ENCODE measurements at regions of chr4 and their contacts with region 1.

Region 1: GRCh38 chr4:184649026-184649970 is at the starts of genes CASP3 and PRIMPOL:
- DNase-seq: peak; percentile 97
- H3K4me3 ChIP-seq: peak within 1 kb of the TSS; percentile 49 to 89 (median 78)
- H3K27ac ChIP-seq: peak within 1 kb of the TSS; percentile 96
- H3K4me1 ChIP-seq: peaks cover 44% of the 10 kb centered on the region
- H3K27me3 ChIP-seq: no peaks in the 10 kb centered on the region
- CTCF ChIP-seq: peak in 1 of 2 donors; percentile 37
- POLR2A ChIP-seq: peak; percentile 87
- total RNA-seq, gene CASP3: 54.5 and 66.1 TPM in 2 replicates
- total RNA-seq, gene PRIMPOL: 11.1 and 13.6 TPM in 2 replicates

Region 2: DNA sequence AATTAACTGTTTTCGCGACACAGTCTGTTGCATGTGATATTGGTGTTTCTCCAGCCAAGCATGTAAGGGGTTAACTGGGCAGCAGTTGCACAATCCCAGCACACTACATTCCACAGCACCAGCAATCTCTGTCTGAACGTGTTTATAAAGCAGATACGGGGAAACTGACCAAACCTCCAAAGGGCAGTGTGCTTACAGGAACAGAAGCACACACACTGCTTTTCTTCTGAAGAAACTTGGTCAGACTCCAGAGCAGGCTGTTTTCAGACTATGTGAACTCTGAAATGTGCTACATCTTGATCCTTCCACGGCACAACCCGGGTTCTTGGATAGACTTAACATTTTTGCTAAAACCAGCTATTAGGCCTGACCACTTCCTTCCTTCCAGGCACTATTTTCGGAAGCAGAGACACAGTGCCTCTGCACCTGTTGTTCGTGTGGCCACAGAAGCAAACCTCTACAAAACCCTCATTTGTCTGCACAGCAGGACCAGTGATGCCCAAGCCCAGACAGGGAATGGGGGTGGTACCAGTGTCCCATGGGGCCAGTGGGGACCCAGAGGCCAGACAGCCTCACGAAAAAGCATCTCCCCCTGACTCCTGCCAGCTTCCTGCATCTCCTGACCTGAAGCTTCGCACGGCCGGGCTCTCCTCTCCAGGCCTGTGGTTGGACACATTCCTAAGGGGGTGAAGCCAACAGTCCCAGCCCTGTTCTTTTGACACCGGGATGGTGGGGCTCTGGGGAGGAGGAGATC is 265.1 kb before region 1 on chr4:
- CTCF ChIA-PET with region 1: no interaction called
- POLR2A ChIA-PET with region 1: no interaction called
- dilution Hi-C with region 1: no loop called
- intact Hi-C with region 1: loop called (anchors 2 kb)
- DNase-seq: peak; percentile 74
- H3K4me3 ChIP-seq: peak overlapping the region in 2 of 3 experiments; percentile 37 to 71
- H3K27ac ChIP-seq: peak overlapping the region; percentile 71
- H3K4me1 ChIP-seq: peaks cover 52% of the 10 kb centered on the region
- H3K27me3 ChIP-seq: no peaks in the 10 kb centered on the region
- CTCF ChIP-seq: no peak
- POLR2A ChIP-seq: no peak

Region 3: DNA sequence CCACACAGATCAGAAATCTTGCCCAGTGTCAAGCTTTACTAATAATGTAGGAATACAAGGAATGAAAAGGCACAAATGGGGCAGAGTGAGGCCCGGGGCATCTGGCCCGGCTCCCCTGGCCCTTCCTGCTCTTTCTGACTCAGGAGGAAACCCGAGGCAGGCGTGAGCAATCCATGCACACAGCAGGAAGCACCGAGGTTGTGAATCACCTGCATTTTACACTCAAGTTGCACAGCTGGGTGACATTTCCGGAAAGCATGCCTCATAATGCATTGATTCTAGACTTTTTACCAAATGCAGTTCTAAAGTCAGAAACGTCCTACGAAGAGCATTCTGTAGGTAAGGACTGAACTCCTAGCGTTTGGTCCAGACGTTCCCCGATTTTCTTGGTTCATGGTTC is 39.1 kb after region 1 on chr4:
- CTCF ChIA-PET with region 1: interaction called, 4 read pairs
- POLR2A ChIA-PET with region 1: interaction called, 6 read pairs
- dilution Hi-C with region 1: no loop called
- intact Hi-C with region 1: loop called (anchors 1 kb)
- DNase-seq: peak; percentile 93
- H3K4me3 ChIP-seq: no peak overlapping the region
- H3K27ac ChIP-seq: peak overlapping the region; percentile 77
- H3K4me1 ChIP-seq: peaks cover 18% of the 10 kb centered on the region
- H3K27me3 ChIP-seq: no peaks in the 10 kb centered on the region
- CTCF ChIP-seq: no peak
- POLR2A ChIP-seq: peak; percentile 54

Region 4: GRCh38 chr4:184733654-184734524 is 84.6 kb after region 1 on chr4 and contains the start of gene CENPU:
- CTCF ChIA-PET with region 1: interaction called, 30 read pairs
- POLR2A ChIA-PET with region 1: interaction called, 17 read pairs
- dilution Hi-C with region 1: no loop called
- intact Hi-C with region 1: loop called (anchors 1 kb)
- DNase-seq: peak; percentile 99
- H3K4me3 ChIP-seq: peak within 1 kb of the TSS; percentile 75 to 91 (median 88)
- H3K27ac ChIP-seq: peak within 1 kb of the TSS; percentile 72
- H3K4me1 ChIP-seq: peaks cover 16% of the 10 kb centered on the region
- H3K27me3 ChIP-seq: no peaks in the 10 kb centered on the region
- CTCF ChIP-seq: no peak
- POLR2A ChIP-seq: peak; percentile 68
- total RNA-seq, gene CENPU: 35.6 and 37.9 TPM in 2 replicates

Region 5: GRCh38 chr4:185005216-185005819 is 356.0 kb after region 1 on chr4:
- CTCF ChIA-PET with region 1: no interaction called
- POLR2A ChIA-PET with region 1: no interaction called
- dilution Hi-C with region 1: no loop called
- intact Hi-C with region 1: loop called (anchors 10 kb)
- DNase-seq: peak; percentile 68
- H3K4me3 ChIP-seq: no peak overlapping the region
- H3K27ac ChIP-seq: no peak overlapping the region
- H3K4me1 ChIP-seq: no peaks in the 10 kb centered on the region
- H3K27me3 ChIP-seq: peaks cover 0 to 8% of the 10 kb centered on the region in 2 experiments
- CTCF ChIP-seq: peak; percentile 94 to 96
- POLR2A ChIP-seq: no peak